ENCODE measurements at regions of chr10 and their contacts with region 1.

Region 1: GRCh38 chr10:25080880-25081581 is 64.6 kb downstream of the THNSL1 start:
- DNase-seq: peak; percentile 48 to 77
- ATAC-seq: peak; percentile 63 to 85 (median 69)
- H3K4me3 ChIP-seq: no peak overlapping the region
- H3K4me3 Mint-ChIP-seq: no peak overlapping the region
- H3K27ac ChIP-seq: no peak overlapping the region
- H3K27ac Mint-ChIP-seq: no peak overlapping the region
- H3K4me1 ChIP-seq: no peaks in the 10 kb centered on the region
- H3K4me1 Mint-ChIP-seq: peaks cover 5 to 10% of the 10 kb centered on the region in 2 donors
- H3K27me3 ChIP-seq: no peaks in the 10 kb centered on the region
- H3K27me3 Mint-ChIP-seq: peaks cover 10 to 12% of the 10 kb centered on the region in 2 donors
- CTCF ChIP-seq: peak; percentile 78

Region 2: DNA sequence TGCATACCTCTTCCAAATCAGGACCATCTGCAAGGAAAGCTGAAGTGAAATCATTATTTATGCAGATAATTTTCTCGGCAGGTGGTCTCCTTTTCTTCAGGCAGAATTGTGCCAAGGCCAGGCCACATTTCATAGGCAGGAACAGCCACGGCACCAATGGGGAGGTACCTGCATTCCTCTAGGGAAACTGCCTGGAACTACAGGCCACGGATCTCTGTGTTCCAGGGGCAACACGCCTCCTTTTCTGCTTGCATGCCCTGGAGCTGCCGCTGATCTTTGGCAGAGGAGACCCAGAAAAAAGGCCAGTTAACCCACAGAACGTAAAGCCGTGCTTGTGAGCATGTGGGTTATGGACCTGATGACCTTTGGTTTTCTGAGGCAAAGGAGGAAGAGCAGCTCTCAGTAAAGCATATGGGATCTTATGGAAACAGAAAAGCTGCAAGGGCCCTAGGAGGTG is 983.3 kb before region 1 on chr10:
- intact Hi-C with region 1: loop called (anchors 10 kb)
- DNase-seq: no peak
- ATAC-seq: no peak
- H3K4me3 ChIP-seq: no peak overlapping the region
- H3K4me3 Mint-ChIP-seq: no peak overlapping the region
- H3K27ac ChIP-seq: no peak overlapping the region
- H3K27ac Mint-ChIP-seq: no peak overlapping the region
- H3K4me1 ChIP-seq: no peaks in the 10 kb centered on the region
- H3K4me1 Mint-ChIP-seq: no peaks in the 10 kb centered on the region
- H3K27me3 ChIP-seq: no peaks in the 10 kb centered on the region
- H3K27me3 Mint-ChIP-seq: no peaks in the 10 kb centered on the region
- CTCF ChIP-seq: no peak

Region 3: DNA sequence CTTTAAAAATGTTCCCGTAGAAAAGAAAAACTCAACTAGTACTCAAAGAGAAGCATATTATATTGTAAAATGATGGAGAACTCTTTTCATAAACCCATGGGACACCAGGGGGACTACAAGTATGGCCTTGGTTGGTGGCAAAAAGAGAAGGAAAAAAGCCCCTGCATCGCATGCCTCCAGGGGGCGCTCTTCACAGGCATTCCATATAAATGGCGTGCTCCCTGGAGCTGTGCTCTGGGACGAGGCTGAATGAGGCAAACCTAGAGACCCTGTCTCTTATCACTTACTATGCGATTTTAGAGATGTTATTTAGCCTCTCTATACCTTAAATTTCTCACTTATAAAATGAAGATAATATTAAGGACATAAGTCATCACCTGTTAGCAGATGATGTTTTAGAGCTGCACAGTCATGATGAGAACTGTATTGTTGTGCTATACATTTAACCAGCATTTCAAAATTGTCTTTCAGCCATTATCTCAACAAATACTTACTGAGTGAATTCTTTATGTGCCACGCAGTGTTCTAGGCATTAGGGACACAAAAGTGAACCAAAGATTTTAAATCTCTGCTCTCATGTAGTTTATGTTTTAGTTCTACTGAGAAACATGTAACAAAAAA is 463.1 kb before region 1 on chr10:
- intact Hi-C with region 1: loop called (anchors 1 kb)
- DNase-seq: peak; percentile 21 to 77
- ATAC-seq: peak in 1 of 3 donors; percentile 57
- H3K4me3 ChIP-seq: no peak overlapping the region
- H3K4me3 Mint-ChIP-seq: no peak overlapping the region
- H3K27ac ChIP-seq: no peak overlapping the region
- H3K27ac Mint-ChIP-seq: no peak overlapping the region
- H3K4me1 ChIP-seq: peaks cover under 1% of the 10 kb centered on the region
- H3K4me1 Mint-ChIP-seq: peaks cover 5 to 8% of the 10 kb centered on the region in 2 donors
- H3K27me3 ChIP-seq: no peaks in the 10 kb centered on the region
- H3K27me3 Mint-ChIP-seq: no peaks in the 10 kb centered on the region
- CTCF ChIP-seq: peak; percentile 73

Measured in natural killer cell (primary cell).